ENCODE measurements at regions of chr22 and their contacts with region 1.

Region 1: DNA sequence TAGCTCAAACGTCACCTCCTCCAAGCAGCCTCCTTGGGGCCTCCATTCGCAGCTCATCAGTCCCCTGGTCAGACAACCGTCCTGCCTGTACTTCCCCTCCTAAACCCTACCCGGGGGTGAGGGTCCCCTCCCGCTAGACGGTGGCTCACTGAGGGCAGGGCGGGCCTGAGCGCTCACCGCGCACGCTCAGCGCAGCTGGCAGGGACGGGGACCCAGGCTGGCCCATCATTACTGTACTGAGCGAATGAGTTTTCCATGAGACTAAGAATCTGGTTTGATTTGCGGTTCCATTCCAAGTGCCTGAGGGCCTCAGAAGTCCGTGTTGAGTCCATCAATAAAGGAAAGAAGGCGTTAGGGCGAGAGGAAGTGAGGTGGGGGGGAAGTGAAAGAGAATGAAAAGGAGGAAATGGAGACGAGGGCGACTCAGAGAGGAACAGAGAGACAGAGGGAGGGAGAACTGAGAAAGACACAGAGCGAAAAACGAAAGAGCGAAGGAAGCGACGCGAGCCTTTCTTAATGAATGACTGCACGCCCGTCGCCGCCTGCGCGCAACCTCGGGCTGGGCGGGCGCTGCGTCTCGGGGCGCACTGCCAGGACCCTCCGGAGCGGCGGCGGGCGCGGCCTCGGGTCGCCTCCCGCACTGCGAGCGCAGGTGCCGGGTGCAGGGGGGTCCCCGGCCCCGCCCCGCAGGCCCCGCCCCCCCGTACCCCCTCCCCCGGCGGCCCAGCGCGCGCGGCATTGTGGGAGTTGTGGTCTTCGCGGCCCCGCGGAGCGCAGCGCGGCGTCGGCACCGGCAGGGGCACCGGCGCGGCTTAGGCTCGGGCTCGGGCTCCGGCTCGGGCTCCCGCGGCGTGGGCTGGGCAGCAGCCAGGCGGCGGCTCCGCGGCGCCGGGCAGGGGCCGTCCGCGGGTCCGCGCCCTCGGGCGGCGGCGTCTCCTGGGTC is at the start of gene ASPHD2:
- DNase-seq: peak; percentile 77
- H3K4me3 Mint-ChIP-seq: peak within 1 kb of the TSS; percentile 97
- H3K27ac Mint-ChIP-seq: peak within 1 kb of the TSS; percentile 97
- H3K4me1 Mint-ChIP-seq: peaks cover 54% of the 10 kb centered on the region
- H3K27me3 Mint-ChIP-seq: peaks cover 21% of the 10 kb centered on the region
- total RNA-seq, gene ASPHD2: 23.4 and 23.5 TPM in 2 replicates

Region 2: GRCh38 chr22:26461188-26461810 is 32.5 kb after region 1 on chr22:
- intact Hi-C with region 1: loop called (anchors 2 kb)
- DNase-seq: peak; percentile 16
- H3K4me3 Mint-ChIP-seq: no peak overlapping the region
- H3K27ac Mint-ChIP-seq: no peak overlapping the region
- H3K4me1 Mint-ChIP-seq: no peaks in the 10 kb centered on the region
- H3K27me3 Mint-ChIP-seq: no peaks in the 10 kb centered on the region

Region 3: DNA sequence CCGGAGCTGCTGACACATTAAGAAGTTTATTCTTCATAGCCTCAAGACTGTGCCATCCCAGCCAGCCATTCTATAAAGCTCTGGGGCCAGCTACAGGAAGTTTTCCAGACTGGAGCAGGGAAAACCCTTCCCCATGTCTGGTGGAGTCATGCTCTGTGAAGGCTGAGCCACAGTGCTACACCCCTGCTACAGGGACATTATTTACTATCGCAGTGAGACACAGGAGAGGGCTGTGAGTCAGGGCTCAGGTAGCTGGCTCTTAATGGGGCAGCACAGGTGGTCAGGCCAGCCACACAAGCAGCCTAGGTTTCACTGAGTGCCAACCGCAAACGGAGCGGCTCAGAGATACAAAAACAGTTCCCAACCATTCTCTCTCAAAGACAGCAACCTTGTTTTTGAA is 42.7 kb after region 1 on chr22:
- intact Hi-C with region 1: no loop called
- DNase-seq: no peak
- H3K4me3 Mint-ChIP-seq: no peak overlapping the region
- H3K27ac Mint-ChIP-seq: peak overlapping the region; percentile 40
- H3K4me1 Mint-ChIP-seq: peaks cover 9% of the 10 kb centered on the region
- H3K27me3 Mint-ChIP-seq: no peaks in the 10 kb centered on the region

Region 4: GRCh38 chr22:26483439-26484359 is 54.9 kb after region 1 on chr22 and contains the starts of genes HPS4 and SRRD:
- intact Hi-C with region 1: loop called (anchors 1 kb)
- DNase-seq: peak; percentile 93
- H3K4me3 Mint-ChIP-seq: peak within 1 kb of the TSS; percentile 95
- H3K27ac Mint-ChIP-seq: peak within 1 kb of the TSS; percentile 94
- H3K4me1 Mint-ChIP-seq: peaks cover 70% of the 10 kb centered on the region
- H3K27me3 Mint-ChIP-seq: no peaks in the 10 kb centered on the region
- total RNA-seq, gene HPS4: 43.8 and 44.5 TPM in 2 replicates
- total RNA-seq, gene SRRD: 29.2 and 34.8 TPM in 2 replicates

Region 5: DNA sequence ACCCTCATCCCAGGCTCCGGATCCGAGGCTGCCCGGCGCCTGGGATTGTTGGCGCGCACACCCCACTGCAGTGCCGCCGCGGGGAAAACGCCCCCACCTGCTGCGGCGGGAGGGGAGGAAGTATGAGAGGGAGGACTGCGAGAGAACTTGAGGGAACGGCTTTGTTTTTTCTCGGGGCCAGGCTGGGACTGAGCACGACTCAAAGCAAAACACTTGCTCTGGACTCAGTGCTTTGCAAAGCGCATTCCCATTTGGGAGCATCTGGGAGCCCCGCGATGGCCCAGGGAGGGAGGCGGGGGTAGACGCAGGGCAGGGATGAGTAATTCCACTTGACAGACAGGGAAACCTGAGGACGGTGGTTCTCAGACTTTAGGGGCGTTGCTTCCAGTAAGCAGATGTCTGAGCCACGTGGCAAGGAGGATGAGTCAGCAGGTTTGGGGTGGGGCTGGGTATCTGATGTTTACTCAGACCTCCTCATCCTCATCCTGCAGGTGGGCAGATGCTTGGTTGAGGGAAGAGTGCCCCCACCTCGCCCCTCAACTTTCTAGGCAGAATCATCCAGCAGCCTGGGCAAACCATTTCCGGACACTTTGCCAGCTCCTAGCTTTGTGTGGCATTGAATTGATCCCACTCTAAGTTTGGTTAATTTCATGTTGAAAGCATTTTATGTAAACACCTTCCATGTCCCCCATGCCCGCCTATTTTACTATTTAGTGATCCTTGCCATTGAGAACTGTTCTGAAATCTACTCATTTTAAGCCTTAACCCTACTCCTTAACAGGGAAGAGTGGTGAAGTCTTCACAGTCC is 230.1 kb after region 1 on chr22:
- intact Hi-C with region 1: loop called (anchors 1 kb)
- DNase-seq: peak; percentile 78
- H3K4me3 Mint-ChIP-seq: peak overlapping the region; percentile 95
- H3K27ac Mint-ChIP-seq: peak overlapping the region; percentile 89
- H3K4me1 Mint-ChIP-seq: peaks cover 46% of the 10 kb centered on the region
- H3K27me3 Mint-ChIP-seq: peaks cover 9% of the 10 kb centered on the region

Region 6: GRCh38 chr22:27919222-27919941 is 1490.6 kb after region 1 on chr22 and contains the start of gene PITPNB:
- intact Hi-C with region 1: loop called (anchors 5 kb)
- DNase-seq: peak; percentile 98
- H3K4me3 Mint-ChIP-seq: peak within 1 kb of the TSS; percentile 99
- H3K27ac Mint-ChIP-seq: peak within 1 kb of the TSS; percentile 100
- H3K4me1 Mint-ChIP-seq: peaks cover 65% of the 10 kb centered on the region
- H3K27me3 Mint-ChIP-seq: peaks cover 5% of the 10 kb centered on the region
- total RNA-seq, gene PITPNB: 153 and 154 TPM in 2 replicates

Measured in activated T-helper 1 cell treated with anti-CD3 and anti-CD28 coated beads, Interleukin-12 subunit alpha, Interleukin-12 subunit beta, Interleukin-2, Interleukin-4 antibody, amounts not matched to agents 30 ng/mL and 10 ng/mL and 1 ng/mL, durations not matched to agents 14 hours and 24 hours and 36 hours (primary cell).